Psoas muscle (tissue), 8 donors: ENCODE measurements at regions of chr15 and their contacts with region 1.

Region 1: DNA sequence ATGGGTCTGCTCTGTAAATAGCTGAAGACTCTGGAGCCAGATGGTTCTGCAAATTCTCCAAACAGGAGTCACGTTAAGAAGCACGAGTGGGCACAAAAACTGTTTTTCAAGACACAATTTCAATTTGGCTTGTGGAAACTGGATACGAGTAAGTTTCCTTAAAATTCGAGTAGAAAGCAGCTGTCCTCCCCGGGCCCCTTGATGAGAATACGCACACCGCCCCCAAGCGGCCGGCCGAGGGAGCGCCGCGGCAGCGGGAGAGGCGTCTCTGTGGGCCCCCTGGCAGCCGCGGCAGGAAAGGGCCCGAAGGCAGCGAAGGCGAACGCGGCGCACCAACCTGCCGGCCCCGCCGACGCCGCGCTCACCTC is 778 bp upstream of the THBS1 start:
- DNase-seq: peak; percentile 93 to 94
- ATAC-seq: peak; percentile 81 to 91 (median 84)
- H3K4me3 ChIP-seq: peak overlapping the region; percentile 65
- H3K27ac ChIP-seq: peak overlapping the region; percentile 60
- H3K4me1 ChIP-seq: no peaks in the 10 kb centered on the region
- H3K27me3 ChIP-seq: peaks cover 0 to 47% (median 11%) of the 10 kb centered on the region in 3 donors
- CTCF ChIP-seq: peak; percentile 90

Region 2: GRCh38 chr15:38707802-38708671 is 872.1 kb before region 1 on chr15:
- intact Hi-C with region 1: loop called in 1 of 2 experiments (anchors 5 kb)
- DNase-seq: no peak
- ATAC-seq: peak in 3 of 4 donors; percentile 49 to 74 (median 55)
- H3K4me3 ChIP-seq: no peak overlapping the region
- H3K27ac ChIP-seq: no peak overlapping the region
- H3K4me1 ChIP-seq: no peaks in the 10 kb centered on the region
- H3K27me3 ChIP-seq: peaks cover 0 to 12% (median 0%) of the 10 kb centered on the region in 3 donors
- CTCF ChIP-seq: peak; percentile 54

Region 3: DNA sequence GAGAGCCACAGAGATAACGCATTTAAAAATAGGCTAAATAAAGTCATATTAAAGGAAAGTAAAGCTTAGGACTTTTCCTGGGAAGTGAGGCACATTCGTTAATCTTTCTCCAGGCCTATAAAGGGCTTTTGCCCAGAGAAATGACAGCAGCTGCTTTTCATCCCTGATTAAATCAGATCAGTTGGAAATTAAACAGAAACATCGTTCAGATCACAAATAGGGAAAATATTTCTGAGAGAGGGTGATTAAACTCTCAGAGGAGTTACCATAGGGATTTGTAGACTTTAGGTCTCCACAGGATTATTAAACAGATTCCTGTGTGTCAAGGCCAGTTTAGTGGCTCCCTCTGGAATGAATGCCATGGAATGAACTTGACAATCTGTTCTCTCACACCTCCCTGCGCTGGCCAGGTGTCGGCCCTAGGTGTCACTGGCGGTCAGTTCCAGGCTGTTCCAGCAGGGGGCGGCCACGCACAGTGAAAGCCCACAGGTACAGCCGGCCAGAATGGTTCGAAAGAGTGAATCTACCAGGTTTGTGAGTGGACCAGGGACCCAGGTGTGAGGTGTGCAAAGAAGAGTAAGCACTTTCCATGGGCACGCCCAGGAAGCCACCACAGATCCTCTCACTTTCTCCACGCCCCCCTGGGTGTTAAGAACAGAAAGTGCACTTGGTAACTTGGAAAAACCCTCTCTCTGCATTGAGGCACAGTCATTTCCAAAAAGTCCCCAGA is 762.5 kb before region 1 on chr15:
- intact Hi-C with region 1: loop called (anchors 5 kb)
- DNase-seq: peak; percentile 74 to 81
- ATAC-seq: peak; percentile 48 to 85 (median 76)
- H3K4me3 ChIP-seq: no peak overlapping the region
- H3K27ac ChIP-seq: no peak overlapping the region
- H3K4me1 ChIP-seq: no peaks in the 10 kb centered on the region
- H3K27me3 ChIP-seq: no peaks in the 10 kb centered on the region
- CTCF ChIP-seq: peak; percentile 91

Region 4: GRCh38 chr15:39171944-39172368 is 408.1 kb before region 1 on chr15:
- intact Hi-C with region 1: loop called in 1 of 2 experiments (anchors 5 kb)
- DNase-seq: peak; percentile 40 to 46
- ATAC-seq: peak in 3 of 4 donors; percentile 66 to 88 (median 66)
- H3K4me3 ChIP-seq: no peak overlapping the region
- H3K27ac ChIP-seq: no peak overlapping the region
- H3K4me1 ChIP-seq: no peaks in the 10 kb centered on the region
- H3K27me3 ChIP-seq: no peaks in the 10 kb centered on the region
- CTCF ChIP-seq: no peak

Region 5: GRCh38 chr15:39426552-39427532 is 153.3 kb before region 1 on chr15:
- intact Hi-C with region 1: no loop called
- DNase-seq: peak; percentile 40 to 60
- ATAC-seq: peak in 2 of 4 donors; percentile 40 to 41
- H3K4me3 ChIP-seq: no peak overlapping the region
- H3K27ac ChIP-seq: no peak overlapping the region
- H3K4me1 ChIP-seq: no peaks in the 10 kb centered on the region
- H3K27me3 ChIP-seq: no peaks in the 10 kb centered on the region
- CTCF ChIP-seq: no peak

Region 6: GRCh38 chr15:39543651-39544050 is 36.5 kb before region 1 on chr15:
- intact Hi-C with region 1: no loop called
- DNase-seq: no peak
- ATAC-seq: no peak
- H3K4me3 ChIP-seq: no peak overlapping the region
- H3K27ac ChIP-seq: no peak overlapping the region
- H3K4me1 ChIP-seq: no peaks in the 10 kb centered on the region
- H3K27me3 ChIP-seq: no peaks in the 10 kb centered on the region
- CTCF ChIP-seq: no peak

Region 7: GRCh38 chr15:40301467-40302179 is 721.5 kb after region 1 on chr15:
- intact Hi-C with region 1: no loop called
- DNase-seq: no peak
- ATAC-seq: no peak
- H3K4me3 ChIP-seq: no peak overlapping the region
- H3K27ac ChIP-seq: no peak overlapping the region
- H3K4me1 ChIP-seq: no peaks in the 10 kb centered on the region
- H3K27me3 ChIP-seq: no peaks in the 10 kb centered on the region
- CTCF ChIP-seq: no peak